ENCODE measurements at regions of chr5 and their contacts with region 1.

Region 1: DNA sequence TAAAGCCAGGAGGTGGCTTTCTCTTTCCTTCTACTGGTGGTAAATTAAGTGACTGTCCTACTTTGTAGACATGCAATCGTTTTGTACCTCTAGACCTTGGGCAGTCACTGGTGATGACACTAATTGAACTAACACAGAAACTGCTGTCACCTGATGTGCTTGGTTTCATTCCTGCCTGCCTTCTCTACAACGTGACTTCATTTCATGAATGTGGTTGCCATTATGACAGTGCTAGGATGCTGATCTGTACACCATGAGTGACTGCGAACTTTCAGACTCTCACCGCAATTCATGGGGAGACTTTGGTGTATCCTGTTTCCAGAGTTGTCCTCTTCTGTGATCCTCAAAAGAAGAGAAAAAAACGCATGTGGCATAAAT is 47.5 kb downstream of the UBE2QL1 start:
- DNase-seq: peak; percentile 47
- H3K4me3 Mint-ChIP-seq: no peak overlapping the region
- H3K27ac Mint-ChIP-seq: peak overlapping the region; percentile 74
- H3K4me1 Mint-ChIP-seq: peaks cover 50% of the 10 kb centered on the region
- H3K27me3 Mint-ChIP-seq: peaks cover 24% of the 10 kb centered on the region

Region 2: DNA sequence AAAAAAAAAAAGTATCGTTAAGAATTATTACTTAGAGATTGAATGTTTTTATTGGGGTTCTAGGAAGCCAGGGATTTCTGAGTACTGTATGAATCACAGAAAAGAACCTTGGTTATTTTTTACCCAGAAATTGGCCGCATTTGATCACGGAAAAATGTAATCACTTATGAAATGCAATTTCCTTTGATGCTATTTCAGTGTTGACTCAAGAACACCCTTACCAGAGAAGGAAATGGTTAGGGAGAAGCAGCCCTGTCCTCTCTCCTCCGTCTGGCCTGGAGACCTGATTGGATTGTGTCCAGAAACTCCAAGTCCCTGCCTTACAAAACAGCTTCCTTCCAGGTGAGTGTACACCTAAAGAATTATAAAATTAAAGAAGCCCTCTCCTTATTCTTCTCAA is 234.5 kb before region 1 on chr5:
- intact Hi-C with region 1: loop called (anchors 2 kb)
- DNase-seq: no peak
- H3K4me3 Mint-ChIP-seq: peak overlapping the region; percentile 65
- H3K27ac Mint-ChIP-seq: peak overlapping the region; percentile 81
- H3K4me1 Mint-ChIP-seq: peaks cover 23% of the 10 kb centered on the region
- H3K27me3 Mint-ChIP-seq: no peaks in the 10 kb centered on the region

Region 3: GRCh38 chr5:6483880-6484382 is 12.3 kb before region 1 on chr5:
- intact Hi-C with region 1: loop called (anchors 2 kb)
- DNase-seq: no peak
- H3K4me3 Mint-ChIP-seq: no peak overlapping the region
- H3K27ac Mint-ChIP-seq: no peak overlapping the region
- H3K4me1 Mint-ChIP-seq: peaks cover 16% of the 10 kb centered on the region
- H3K27me3 Mint-ChIP-seq: peaks cover 26% of the 10 kb centered on the region

Region 4: GRCh38 chr5:6675763-6676499 is 179.7 kb after region 1 on chr5:
- intact Hi-C with region 1: no loop called
- DNase-seq: no peak
- H3K4me3 Mint-ChIP-seq: no peak overlapping the region
- H3K27ac Mint-ChIP-seq: no peak overlapping the region
- H3K4me1 Mint-ChIP-seq: no peaks in the 10 kb centered on the region
- H3K27me3 Mint-ChIP-seq: no peaks in the 10 kb centered on the region

Region 5: DNA sequence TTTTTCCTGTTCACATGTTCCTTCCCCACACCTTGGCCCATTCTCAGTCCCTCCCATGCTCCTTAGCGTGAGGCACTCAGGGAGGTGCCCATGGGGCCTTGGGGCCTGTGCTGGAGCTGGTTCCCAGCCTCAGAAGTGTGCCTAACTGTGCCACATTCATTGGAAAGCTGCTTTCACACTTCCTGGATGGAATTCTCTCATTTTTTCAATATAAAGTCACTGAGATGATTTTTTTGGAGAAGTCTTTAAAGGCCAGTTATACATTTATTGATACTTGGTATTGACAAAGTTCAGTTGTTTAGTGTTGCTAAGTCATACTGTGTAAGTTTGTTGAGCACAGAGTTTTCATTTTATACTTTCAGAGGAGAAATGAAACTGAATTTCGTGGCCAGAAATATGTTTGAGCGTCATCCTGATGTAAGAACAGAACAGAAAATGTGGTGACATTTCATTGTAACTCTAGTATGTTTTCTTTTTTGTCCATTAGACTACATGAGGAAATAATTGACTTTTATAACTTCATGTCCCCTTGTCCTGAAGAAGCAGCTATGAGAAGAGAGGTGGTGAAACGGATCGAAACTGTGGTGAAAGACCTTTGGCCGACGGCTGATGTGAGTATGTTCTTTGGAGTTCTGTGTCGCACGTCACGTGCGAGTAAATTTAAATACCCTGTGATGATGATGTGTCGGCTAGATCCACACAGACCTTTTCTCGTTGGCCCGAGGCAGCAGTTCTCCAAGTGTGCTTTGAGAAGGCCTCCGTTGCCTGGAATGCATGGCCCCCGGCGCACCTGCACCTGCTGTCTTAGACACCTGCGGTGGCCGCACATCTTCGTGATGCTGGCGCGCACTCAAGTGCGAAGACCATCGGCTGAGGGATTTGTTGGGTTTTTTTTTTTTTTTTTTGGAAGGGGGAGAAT is 241.1 kb after region 1 on chr5:
- intact Hi-C with region 1: loop called (anchors 5 kb)
- DNase-seq: no peak
- H3K4me3 Mint-ChIP-seq: peak overlapping the region; percentile 50
- H3K27ac Mint-ChIP-seq: peak overlapping the region; percentile 93
- H3K4me1 Mint-ChIP-seq: peaks cover 43% of the 10 kb centered on the region
- H3K27me3 Mint-ChIP-seq: no peaks in the 10 kb centered on the region

Measured in activated T-helper 2 cell treated with anti-CD3 and anti-CD28 coated beads, Interferon-gamma antibody, Interleukin-2, Interleukin-4, amounts not matched to agents 10 μg/mL and 5 μg/mL and 100 μg/mL, durations not matched to agents 14 hours and 24 hours and 36 hours (primary cell).